Activated naive CD4-positive, alpha-beta T cell treated with anti-CD3 and anti-CD28 coated beads, Interleukin-2, amount 10 ng/mL, durations not matched to agents 7 days and 5 days (primary cell): ENCODE measurements at regions of chr2 and their contacts with region 1.

Region 1: DNA sequence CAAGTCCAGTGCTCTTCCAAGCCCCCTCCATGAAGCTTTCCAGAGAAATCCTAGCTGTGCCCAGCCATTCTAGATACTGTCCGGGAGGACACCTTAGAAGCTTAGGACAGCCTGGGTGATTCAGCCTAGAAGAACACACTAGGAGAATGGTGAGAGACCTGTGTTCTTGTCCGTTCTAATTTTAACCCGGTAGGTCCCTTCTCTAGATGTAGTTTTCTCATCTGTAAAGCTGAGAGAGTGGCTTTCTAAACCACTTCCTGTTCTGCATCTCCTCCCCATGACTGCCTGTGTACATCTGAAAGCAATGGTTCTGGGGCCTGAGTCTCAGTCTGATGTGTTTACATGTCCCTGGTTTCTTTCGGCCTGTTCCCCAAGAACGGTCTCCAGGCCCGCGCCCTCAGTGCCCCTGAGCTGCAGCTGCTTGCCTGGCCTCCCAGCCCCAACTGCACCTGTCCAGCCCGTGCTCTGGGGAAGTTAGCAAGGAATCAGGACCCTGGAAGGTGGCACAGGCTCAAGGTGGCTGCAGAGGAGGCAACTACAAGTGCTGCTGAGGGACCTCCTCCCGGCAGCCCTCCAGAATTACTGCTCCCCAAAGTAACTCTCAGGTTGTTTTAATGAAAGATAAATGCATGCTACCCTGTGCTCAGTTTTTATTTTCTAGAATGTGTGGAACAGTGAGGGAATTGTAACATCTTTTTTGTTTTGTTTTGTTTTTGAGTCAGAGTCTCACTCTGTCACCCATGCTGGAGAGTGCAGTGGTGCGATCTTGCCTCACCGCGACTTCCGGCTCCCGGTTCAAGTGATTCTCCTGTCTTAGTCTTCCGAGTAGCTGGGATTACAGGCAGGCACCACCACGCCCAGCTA is 105.9 kb downstream of the LBH start:
- DNase-seq: peak; percentile 74
- H3K4me3 Mint-ChIP-seq: peak overlapping the region; percentile 72
- H3K27ac Mint-ChIP-seq: peak overlapping the region; percentile 99
- H3K4me1 Mint-ChIP-seq: peaks cover 72% of the 10 kb centered on the region
- H3K27me3 Mint-ChIP-seq: no peaks in the 10 kb centered on the region

Region 2: DNA sequence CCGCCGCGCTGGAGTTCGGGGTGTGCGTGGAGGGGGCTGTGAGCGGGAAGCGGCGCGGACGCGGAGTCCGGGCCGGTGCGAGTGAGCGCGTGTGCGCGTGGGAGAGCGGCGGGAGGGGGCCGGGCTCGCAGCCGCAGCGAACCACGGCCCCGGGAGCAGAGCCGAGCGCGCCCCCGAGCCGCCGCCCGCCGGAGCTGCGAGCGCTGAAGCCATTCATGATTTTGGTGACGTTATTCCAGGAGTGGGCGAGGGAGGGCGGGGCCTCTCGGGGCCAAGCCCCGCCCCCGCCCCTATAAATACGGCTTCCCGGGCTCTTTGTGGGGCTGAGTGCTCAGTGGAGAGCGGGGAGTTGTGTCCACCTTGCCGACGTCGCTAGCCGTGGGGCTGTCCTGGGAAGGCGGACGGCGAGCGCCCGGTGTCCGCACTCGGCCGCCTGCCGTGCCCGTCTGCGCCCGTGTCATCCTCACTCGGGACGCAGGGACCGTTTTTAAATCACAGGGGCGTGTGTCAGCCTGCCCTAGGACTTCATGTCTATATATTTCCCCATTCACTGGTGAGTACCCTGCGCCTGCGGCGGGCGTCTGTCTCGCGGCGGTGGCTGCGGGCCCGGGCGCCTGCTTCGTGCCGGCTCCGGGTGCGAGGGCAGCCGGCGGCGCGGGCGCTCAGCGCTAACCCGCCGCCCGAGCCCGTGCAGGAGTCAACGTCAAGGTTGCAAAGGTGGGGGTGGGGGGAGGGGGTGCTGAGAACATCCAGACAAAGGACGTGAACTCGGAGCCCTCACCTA is 105.8 kb before region 1 on chr2 and contains the start of gene LBH:
- CTCF ChIA-PET with region 1: interaction called, 10 read pairs
- DNase-seq: peak; percentile 89
- H3K4me3 Mint-ChIP-seq: peak within 1 kb of the TSS; percentile 79
- H3K27ac Mint-ChIP-seq: peak within 1 kb of the TSS; percentile 97
- H3K4me1 Mint-ChIP-seq: peaks cover 61% of the 10 kb centered on the region
- H3K27me3 Mint-ChIP-seq: peaks cover 16% of the 10 kb centered on the region

Region 3: DNA sequence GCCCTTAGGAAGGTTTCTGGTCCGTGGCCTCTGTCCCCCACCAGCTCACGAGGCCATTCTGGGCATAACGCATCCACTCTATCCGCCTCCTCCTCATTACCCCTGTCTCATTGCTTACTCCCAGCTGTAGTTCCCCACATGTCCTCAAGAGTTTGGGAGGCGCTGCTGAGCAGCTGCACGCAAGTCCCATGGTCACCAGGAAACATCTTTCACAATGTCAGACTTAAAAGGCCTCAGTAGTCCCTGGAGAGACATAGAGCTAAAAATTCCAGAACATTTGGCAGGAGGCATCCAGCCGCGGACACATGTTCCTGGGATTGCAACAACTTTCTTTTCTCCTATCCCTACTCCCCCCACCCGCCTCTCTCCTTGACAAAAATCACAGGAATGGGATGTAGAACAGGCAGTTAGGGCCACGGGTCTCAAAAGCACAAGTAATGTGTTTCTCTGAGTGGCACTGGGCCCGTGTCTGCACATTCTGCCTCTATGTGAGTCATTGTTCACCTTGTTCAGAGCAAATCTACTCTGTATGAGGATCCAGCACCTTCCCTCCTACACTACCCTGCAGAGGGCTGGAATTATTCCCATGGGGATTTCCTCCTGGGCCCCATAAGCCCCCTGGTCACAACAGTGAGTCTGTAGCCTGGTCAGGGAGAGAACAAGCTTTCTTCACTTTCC is 97.8 kb before region 1 on chr2:
- CTCF ChIA-PET with region 1: interaction called, 20 read pairs
- DNase-seq: peak; percentile 77
- H3K4me3 Mint-ChIP-seq: peak overlapping the region; percentile 2
- H3K27ac Mint-ChIP-seq: peak overlapping the region; percentile 67
- H3K4me1 Mint-ChIP-seq: peaks cover 89% of the 10 kb centered on the region
- H3K27me3 Mint-ChIP-seq: no peaks in the 10 kb centered on the region

Region 4: DNA sequence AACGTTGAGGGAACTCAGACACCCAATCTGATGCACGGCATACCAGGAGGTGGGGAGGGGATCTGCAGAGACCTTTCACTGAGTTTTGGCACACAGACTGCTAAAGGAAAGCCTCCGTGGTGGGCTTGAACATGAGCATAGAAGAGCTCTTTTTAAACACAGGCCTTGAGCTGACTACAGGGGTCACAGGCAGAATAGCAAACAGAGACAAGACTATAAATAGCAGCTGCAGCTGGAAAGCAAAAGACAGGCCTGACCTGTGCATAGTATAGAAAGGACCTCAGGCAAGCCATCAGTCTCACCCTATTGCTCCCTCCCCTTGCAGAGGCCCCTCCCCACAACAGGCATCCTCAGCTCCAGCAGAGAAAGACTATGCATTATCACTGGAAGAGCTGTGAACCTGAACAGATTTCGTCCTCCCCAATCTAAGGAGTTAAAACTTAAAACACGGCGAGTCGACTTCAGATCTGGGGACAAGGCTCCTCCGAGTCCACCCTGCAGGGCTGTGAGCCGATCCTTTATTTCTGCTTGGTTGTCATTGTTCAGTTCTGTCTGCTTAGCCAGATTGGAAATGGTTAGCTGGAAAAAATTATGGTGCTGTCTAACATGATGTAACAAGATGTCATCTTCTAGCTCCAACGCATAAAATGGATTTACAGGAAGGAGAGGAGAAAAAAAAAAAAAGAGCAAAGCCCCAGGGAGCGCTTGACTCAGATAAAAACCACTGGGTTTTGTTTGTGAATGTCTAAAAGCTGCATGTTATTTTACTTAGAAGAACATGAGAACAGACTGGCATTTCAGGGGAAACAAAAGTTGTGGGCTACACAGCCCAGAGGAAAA is 84.6 kb after region 1 on chr2:
- CTCF ChIA-PET with region 1: interaction called, 10 read pairs
- DNase-seq: peak; percentile 39
- H3K4me3 Mint-ChIP-seq: peak overlapping the region; percentile 15
- H3K27ac Mint-ChIP-seq: peak overlapping the region; percentile 83
- H3K4me1 Mint-ChIP-seq: peaks cover 38% of the 10 kb centered on the region
- H3K27me3 Mint-ChIP-seq: no peaks in the 10 kb centered on the region